IMR-90 (cell line): ENCODE measurements at regions of chr15 and their contacts with region 1.

Region 1: DNA sequence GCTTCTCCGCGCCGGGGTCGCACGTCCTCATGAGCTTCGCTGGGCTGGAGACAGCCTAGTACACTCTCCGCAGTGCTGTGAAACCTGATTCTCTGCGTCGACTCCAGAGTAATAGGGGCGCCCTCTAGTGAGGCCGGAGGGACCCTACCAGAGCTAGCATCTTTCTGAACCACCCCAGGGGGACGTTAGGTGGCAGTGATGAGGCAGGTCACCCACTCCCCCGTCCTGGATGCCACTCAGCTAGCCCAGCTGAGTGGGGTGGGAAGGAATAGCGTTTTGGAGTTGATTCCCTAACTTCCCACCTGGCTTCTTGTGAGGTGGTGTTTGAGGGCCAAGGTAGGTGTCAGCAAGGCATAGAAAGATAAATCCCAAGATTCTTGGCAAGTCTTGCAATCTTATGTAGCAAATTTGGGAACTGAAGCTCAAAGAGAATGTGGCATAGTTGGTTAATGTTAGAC is 4.0 kb downstream of the DUOXA2 start:
- DNase-seq: peak; percentile 88
- ATAC-seq: peak; percentile 97
- H3K4me3 ChIP-seq: no peak overlapping the region
- H3K27ac ChIP-seq: no peak overlapping the region
- H3K4me1 ChIP-seq: peaks cover 3% of the 10 kb centered on the region
- H3K27me3 ChIP-seq: peaks cover 46% of the 10 kb centered on the region
- CTCF ChIP-seq: peak; percentile 100
- POLR2A ChIP-seq: no peak
- RAD21 ChIP-seq: peak; percentile 79

Region 2: DNA sequence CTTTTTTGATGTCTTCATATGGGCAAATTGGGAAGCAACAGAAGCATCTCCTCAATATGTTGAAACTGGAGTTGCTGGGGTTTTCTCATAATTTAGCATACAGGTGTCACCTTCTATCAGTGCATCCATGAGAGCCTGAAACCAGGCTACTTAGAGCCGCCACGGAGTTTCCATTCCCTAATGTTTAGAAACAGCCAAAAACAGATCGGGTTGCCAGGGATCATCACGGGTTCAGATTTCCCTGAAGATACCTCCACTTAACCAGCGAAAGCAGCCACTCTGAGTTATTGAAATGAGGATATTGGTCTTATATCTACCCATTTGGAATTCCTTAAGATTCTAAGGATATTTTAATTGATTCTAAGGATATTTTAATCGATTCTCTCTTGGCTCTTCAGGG is 147.1 kb before region 1 on chr15:
- CTCF ChIA-PET with region 1: interaction called, 4 read pairs
- POLR2A ChIA-PET with region 1: no interaction called
- dilution Hi-C with region 1: no loop called
- in situ Hi-C with region 1: no loop called
- intact Hi-C with region 1: loop called (anchors 2 kb)
- DNase-seq: no peak
- ATAC-seq: no peak
- H3K4me3 ChIP-seq: no peak overlapping the region
- H3K27ac ChIP-seq: no peak overlapping the region
- H3K4me1 ChIP-seq: no peaks in the 10 kb centered on the region
- H3K27me3 ChIP-seq: no peaks in the 10 kb centered on the region; the same call in 1 of the 2 replicates
- CTCF ChIP-seq: no peak
- POLR2A ChIP-seq: no peak
- RAD21 ChIP-seq: no peak

Region 3: GRCh38 chr15:45037936-45038335 is 80.2 kb before region 1 on chr15:
- CTCF ChIA-PET with region 1: interaction called, 14 read pairs
- POLR2A ChIA-PET with region 1: no interaction called
- dilution Hi-C with region 1: no loop called
- in situ Hi-C with region 1: no loop called
- intact Hi-C with region 1: loop called (anchors 1 kb)
- DNase-seq: no peak
- ATAC-seq: no peak
- H3K4me3 ChIP-seq: no peak overlapping the region
- H3K27ac ChIP-seq: no peak overlapping the region
- H3K4me1 ChIP-seq: no peaks in the 10 kb centered on the region
- H3K27me3 ChIP-seq: no peaks in the 10 kb centered on the region
- CTCF ChIP-seq: no peak
- POLR2A ChIP-seq: no peak
- RAD21 ChIP-seq: no peak

Region 4: GRCh38 chr15:45083223-45083622 is 34.9 kb before region 1 on chr15:
- CTCF ChIA-PET with region 1: interaction called, 14 read pairs
- POLR2A ChIA-PET with region 1: no interaction called
- dilution Hi-C with region 1: no loop called
- in situ Hi-C with region 1: no loop called
- intact Hi-C with region 1: no loop called
- DNase-seq: no peak
- ATAC-seq: no peak
- H3K4me3 ChIP-seq: no peak overlapping the region
- H3K27ac ChIP-seq: no peak overlapping the region
- H3K4me1 ChIP-seq: no peaks in the 10 kb centered on the region
- H3K27me3 ChIP-seq: peaks cover 20% of the 10 kb centered on the region
- CTCF ChIP-seq: no peak
- POLR2A ChIP-seq: no peak
- RAD21 ChIP-seq: no peak

Region 5: DNA sequence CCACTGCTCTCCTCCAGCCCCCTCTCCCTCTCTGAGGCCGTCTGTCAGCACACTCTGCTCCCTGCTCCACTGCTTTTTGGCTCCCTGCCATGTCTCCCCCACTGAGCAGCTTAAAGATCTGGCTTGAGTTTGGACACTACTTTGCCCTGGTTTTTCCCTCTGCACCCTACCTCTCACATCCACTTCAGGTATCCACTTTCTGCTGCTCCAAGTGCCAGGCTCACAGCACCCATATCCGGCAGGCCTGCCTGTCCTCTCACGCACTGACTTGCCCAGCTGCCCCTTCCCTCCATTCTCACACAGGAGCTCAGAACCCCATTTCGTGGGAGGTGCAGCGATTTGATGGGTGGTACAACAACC is 15.4 kb after region 1 on chr15:
- CTCF ChIA-PET with region 1: interaction called, 11 read pairs
- POLR2A ChIA-PET with region 1: no interaction called
- dilution Hi-C with region 1: no loop called
- in situ Hi-C with region 1: no loop called
- intact Hi-C with region 1: no loop called
- DNase-seq: no peak
- ATAC-seq: no peak
- H3K4me3 ChIP-seq: no peak overlapping the region
- H3K27ac ChIP-seq: no peak overlapping the region
- H3K4me1 ChIP-seq: no peaks in the 10 kb centered on the region; the same call in 1 of the 2 replicates
- H3K27me3 ChIP-seq: peaks cover 85% of the 10 kb centered on the region
- CTCF ChIP-seq: no peak
- POLR2A ChIP-seq: no peak
- RAD21 ChIP-seq: no peak